Naive thymus-derived CD4-positive, alpha-beta T cell (primary cell): ENCODE measurements at regions of chr2 and their contacts with region 1.

Region 1: GRCh38 chr2:30165050-30165520 is 18.3 kb downstream of the YPEL5 start:
- DNase-seq: peak in 8 of 9 donors; percentile 41 to 89 (median 84)
- ATAC-seq: peak; percentile 75
- H3K4me3 ChIP-seq: no peak overlapping the region
- H3K4me3 Mint-ChIP-seq: peak overlapping the region in 1 of 10 donors; percentile 37
- H3K27ac ChIP-seq: no peak overlapping the region
- H3K27ac Mint-ChIP-seq: peak overlapping the region in 4 of 9 donors; percentile 19 to 76 (median 50)
- H3K4me1 ChIP-seq: peaks cover 0 to 5% of the 10 kb centered on the region in 2 donors
- H3K4me1 Mint-ChIP-seq: peaks cover 3 to 12% (median 6%) of the 10 kb centered on the region in 7 donors
- H3K27me3 ChIP-seq: no peaks in the 10 kb centered on the region
- H3K27me3 Mint-ChIP-seq: no peaks in the 10 kb centered on the region

Region 2: DNA sequence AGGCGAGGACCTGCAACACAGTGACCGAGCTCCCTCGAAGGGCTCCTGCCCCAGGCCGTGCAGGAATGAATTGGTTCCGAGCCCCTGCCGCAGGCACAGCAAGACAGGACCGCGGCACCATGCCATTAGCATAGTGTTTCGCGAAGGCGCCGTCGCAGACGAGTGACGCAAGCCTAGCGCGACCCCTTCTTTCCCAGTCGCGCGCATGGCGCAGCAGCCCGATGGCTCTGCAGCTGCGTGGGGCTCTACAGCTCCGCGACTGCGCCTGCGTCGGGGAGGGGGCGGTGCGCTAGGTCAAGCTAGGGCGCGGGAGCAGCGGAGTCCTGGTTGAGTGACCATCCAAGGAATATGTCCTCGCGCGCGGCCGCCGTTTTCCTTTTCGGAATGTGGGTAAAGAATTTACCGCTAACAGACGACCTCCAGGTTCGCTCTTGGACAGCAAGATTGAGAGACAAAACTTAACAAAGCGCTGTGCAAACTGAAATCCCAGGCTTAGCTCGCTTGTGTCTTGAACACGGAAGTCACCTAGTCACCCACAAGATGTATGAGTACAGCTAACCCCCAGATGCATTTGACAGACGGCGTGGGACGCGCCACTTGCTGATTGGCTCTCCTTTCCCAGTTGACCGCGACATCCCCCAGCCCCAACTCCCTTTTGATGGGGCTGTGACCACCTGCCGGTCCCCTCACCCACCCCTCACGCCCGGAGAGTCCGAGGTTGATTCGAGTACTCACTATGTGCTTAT is 1294.8 kb before region 1 on chr2 and contains the start of gene TRMT61B:
- CTCF ChIA-PET with region 1: no interaction called
- POLR2A ChIA-PET with region 1: no interaction called
- intact Hi-C with region 1: no loop called
- DNase-seq: peak; percentile 94 to 97 (median 95)
- ATAC-seq: peak; percentile 98
- H3K4me3 ChIP-seq: peak within 1 kb of the TSS; percentile 96
- H3K4me3 Mint-ChIP-seq: peak within 1 kb of the TSS; percentile 90 to 98 (median 96)
- H3K27ac ChIP-seq: peak within 1 kb of the TSS; percentile 87
- H3K27ac Mint-ChIP-seq: peak within 1 kb of the TSS; percentile 95 to 100 (median 98)
- H3K4me1 ChIP-seq: peaks cover 19 to 22% of the 10 kb centered on the region in 2 donors
- H3K4me1 Mint-ChIP-seq: peaks cover 22 to 48% (median 37%) of the 10 kb centered on the region in 7 donors
- H3K27me3 ChIP-seq: no peaks in the 10 kb centered on the region
- H3K27me3 Mint-ChIP-seq: peaks cover 0 to 6% (median 2%) of the 10 kb centered on the region in 5 donors
- total RNA-seq, gene TRMT61B: 14.8 to 24.5 (median 20.5) TPM

Region 3: GRCh38 chr2:30122362-30122761 is 42.7 kb before region 1 on chr2:
- CTCF ChIA-PET with region 1: interaction called, 10 read pairs
- POLR2A ChIA-PET with region 1: no interaction called
- intact Hi-C with region 1: no loop called
- DNase-seq: no peak
- ATAC-seq: no peak
- H3K4me3 ChIP-seq: no peak overlapping the region
- H3K4me3 Mint-ChIP-seq: no peak overlapping the region
- H3K27ac ChIP-seq: no peak overlapping the region
- H3K27ac Mint-ChIP-seq: no peak overlapping the region
- H3K4me1 ChIP-seq: no peaks in the 10 kb centered on the region
- H3K4me1 Mint-ChIP-seq: peaks cover 0 to 3% (median 0%) of the 10 kb centered on the region in 7 donors
- H3K27me3 ChIP-seq: peaks cover 0 to 4% of the 10 kb centered on the region in 2 donors
- H3K27me3 Mint-ChIP-seq: peaks cover 0 to 32% (median 9%) of the 10 kb centered on the region in 5 donors

Region 4: DNA sequence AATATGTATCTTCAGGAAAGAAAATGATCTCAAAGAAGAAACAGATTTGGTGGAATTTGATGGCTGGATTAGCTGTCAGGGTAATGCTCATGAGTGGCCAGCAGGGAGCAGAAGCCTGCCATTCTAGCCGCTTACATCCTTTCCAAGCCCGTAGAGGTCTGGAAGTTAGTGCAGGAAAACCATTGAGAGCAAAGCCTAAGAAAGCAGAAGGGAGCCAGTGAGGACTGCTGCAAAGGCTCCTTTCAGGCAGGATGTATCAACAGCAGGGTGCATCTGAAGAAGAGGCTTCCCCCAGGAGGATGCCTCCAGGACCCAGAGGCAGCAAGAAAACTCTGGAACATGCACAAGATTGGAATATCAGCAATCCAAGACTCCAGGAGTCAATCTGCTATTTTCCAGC is 43.4 kb after region 1 on chr2:
- CTCF ChIA-PET with region 1: interaction called, 54 read pairs
- POLR2A ChIA-PET with region 1: interaction called, 5 read pairs
- intact Hi-C with region 1: loop called (anchors 1 to 2 kb)
- DNase-seq: peak in 4 of 9 donors; percentile 19 to 42 (median 28)
- ATAC-seq: peak; percentile 69
- H3K4me3 ChIP-seq: peak overlapping the region; percentile 3
- H3K4me3 Mint-ChIP-seq: peak overlapping the region; percentile 14 to 80 (median 68)
- H3K27ac ChIP-seq: peak overlapping the region; percentile 25
- H3K27ac Mint-ChIP-seq: peak overlapping the region in 8 of 9 donors; percentile 82 to 95 (median 88)
- H3K4me1 ChIP-seq: peaks cover 8 to 33% of the 10 kb centered on the region in 2 donors
- H3K4me1 Mint-ChIP-seq: peaks cover 14 to 44% (median 35%) of the 10 kb centered on the region in 7 donors
- H3K27me3 ChIP-seq: no peaks in the 10 kb centered on the region
- H3K27me3 Mint-ChIP-seq: peaks cover 0 to 7% (median 0%) of the 10 kb centered on the region in 5 donors

Region 5: GRCh38 chr2:30231212-30231995 is 66.3 kb after region 1 on chr2 and contains the start of gene LBH:
- CTCF ChIA-PET with region 1: interaction called, 16 read pairs
- POLR2A ChIA-PET with region 1: interaction called, 16 read pairs
- intact Hi-C with region 1: loop called in 1 of 2 experiments (anchors 1 kb)
- DNase-seq: peak; percentile 74 to 92 (median 88)
- ATAC-seq: peak; percentile 72
- H3K4me3 ChIP-seq: peak within 1 kb of the TSS; percentile 75
- H3K4me3 Mint-ChIP-seq: peak within 1 kb of the TSS; percentile 87 to 98 (median 94)
- H3K27ac ChIP-seq: peak within 1 kb of the TSS; percentile 97
- H3K27ac Mint-ChIP-seq: peak within 1 kb of the TSS; percentile 87 to 100 (median 96)
- H3K4me1 ChIP-seq: peaks cover 49 to 55% of the 10 kb centered on the region in 2 donors
- H3K4me1 Mint-ChIP-seq: peaks cover 26 to 65% (median 57%) of the 10 kb centered on the region in 7 donors
- H3K27me3 ChIP-seq: no peaks in the 10 kb centered on the region
- H3K27me3 Mint-ChIP-seq: peaks cover 0 to 8% (median 0%) of the 10 kb centered on the region in 5 donors
- total RNA-seq, gene LBH: 146 to 517 (median 192) TPM

Region 6: DNA sequence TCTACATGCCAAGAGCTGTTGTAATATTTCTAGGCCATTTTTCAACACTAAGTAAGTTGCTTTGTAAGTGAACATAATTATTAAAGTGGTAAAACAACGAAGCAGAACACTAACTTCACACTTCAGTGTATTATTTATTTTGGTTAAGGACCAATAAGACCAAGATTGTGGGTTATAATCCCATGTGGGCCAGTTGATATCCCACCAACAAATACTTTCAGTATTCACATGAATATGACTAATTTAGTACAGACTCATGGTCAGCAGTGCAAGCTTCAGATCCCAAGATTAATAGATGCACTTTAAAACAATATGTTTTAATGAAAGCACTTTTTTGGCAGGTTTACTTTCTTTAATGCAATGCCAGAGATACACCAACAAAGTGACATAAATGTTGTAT is 436.3 kb after region 1 on chr2:
- CTCF ChIA-PET with region 1: interaction called, 10 read pairs
- POLR2A ChIA-PET with region 1: no interaction called
- intact Hi-C with region 1: no loop called
- DNase-seq: no peak
- ATAC-seq: no peak
- H3K4me3 ChIP-seq: no peak overlapping the region
- H3K4me3 Mint-ChIP-seq: no peak overlapping the region
- H3K27ac ChIP-seq: no peak overlapping the region
- H3K27ac Mint-ChIP-seq: peak overlapping the region in 1 of 9 donors; percentile 44
- H3K4me1 ChIP-seq: no peaks in the 10 kb centered on the region
- H3K4me1 Mint-ChIP-seq: peaks cover 0 to 17% (median 4%) of the 10 kb centered on the region in 7 donors
- H3K27me3 ChIP-seq: no peaks in the 10 kb centered on the region
- H3K27me3 Mint-ChIP-seq: no peaks in the 10 kb centered on the region

Region 7: DNA sequence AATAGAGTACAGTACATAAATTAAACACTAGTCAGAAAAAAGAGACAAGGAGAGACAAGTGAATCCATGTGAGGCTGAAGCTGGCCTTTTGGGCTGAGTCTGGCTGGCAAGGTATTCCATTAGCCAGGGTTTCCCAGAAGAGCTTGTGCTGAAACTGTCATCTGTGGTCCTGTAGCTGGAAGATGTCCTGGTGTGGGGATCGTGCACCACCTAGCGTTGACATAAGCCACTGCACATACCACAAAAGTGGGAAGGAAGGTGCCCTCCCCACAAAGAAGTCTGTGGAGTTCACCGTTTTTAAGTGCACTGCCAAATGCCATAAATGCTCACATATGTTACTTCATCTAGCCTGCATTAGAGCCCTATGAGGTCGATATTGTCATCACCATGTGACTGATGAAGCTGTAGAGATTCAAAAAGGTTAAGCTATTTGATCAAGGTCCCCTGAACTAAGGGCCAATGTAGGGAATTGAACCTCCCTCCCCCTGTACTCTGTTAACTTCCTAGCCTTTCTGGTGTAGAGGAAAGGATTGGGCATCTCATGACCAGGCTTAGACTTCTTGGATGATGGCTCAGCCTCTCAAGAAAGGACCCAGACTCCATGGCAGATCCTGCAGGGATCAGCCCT is 1005.1 kb after region 1 on chr2:
- CTCF ChIA-PET with region 1: interaction called, 6 read pairs
- POLR2A ChIA-PET with region 1: no interaction called
- intact Hi-C with region 1: loop called in 1 of 2 experiments (anchors 10 kb)
- DNase-seq: peak in 8 of 9 donors; percentile 3 to 49 (median 28)
- ATAC-seq: peak; percentile 78
- H3K4me3 ChIP-seq: no peak overlapping the region
- H3K4me3 Mint-ChIP-seq: no peak overlapping the region
- H3K27ac ChIP-seq: no peak overlapping the region
- H3K27ac Mint-ChIP-seq: peak overlapping the region in 1 of 9 donors; percentile 32
- H3K4me1 ChIP-seq: no peaks in the 10 kb centered on the region
- H3K4me1 Mint-ChIP-seq: peaks cover 0 to under 1% (median 0%) of the 10 kb centered on the region in 7 donors
- H3K27me3 ChIP-seq: no peaks in the 10 kb centered on the region
- H3K27me3 Mint-ChIP-seq: peaks cover 0 to 6% (median under 1%) of the 10 kb centered on the region in 5 donors

Region 8: DNA sequence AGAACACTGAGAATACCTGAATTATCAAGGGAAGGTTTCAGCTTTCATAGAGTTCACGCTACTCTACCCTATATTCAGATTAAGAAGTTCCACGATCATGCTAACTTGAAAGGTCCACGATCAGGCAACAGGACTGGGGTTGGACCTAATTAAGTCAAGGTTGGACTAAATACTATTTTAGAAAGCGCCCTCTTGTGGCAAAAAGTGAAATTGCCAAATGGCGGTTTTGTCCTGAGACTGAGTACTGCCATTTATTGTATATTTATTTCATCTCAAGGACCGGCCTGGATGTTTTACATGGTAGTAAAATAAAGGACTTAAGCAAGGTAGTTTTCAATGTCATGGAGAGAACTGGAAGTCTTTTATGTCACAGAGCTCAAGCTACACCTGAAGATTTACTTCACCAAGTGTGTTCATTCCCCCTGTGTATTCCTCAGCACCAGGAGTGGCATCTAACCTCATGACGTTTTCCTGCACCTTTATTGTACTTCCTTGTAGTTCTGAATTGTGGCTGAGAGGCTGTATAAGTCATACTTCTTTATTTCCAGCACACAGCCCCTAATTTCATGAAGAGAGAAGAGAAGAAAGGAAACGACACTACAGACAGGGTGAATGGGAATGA is 1358.9 kb after region 1 on chr2:
- CTCF ChIA-PET with region 1: no interaction called
- POLR2A ChIA-PET with region 1: no interaction called
- intact Hi-C with region 1: loop called in 1 of 2 experiments (anchors 10 kb)
- DNase-seq: peak in 7 of 9 donors; percentile 12 to 45 (median 34)
- ATAC-seq: peak; percentile 53
- H3K4me3 ChIP-seq: no peak overlapping the region
- H3K4me3 Mint-ChIP-seq: no peak overlapping the region
- H3K27ac ChIP-seq: no peak overlapping the region
- H3K27ac Mint-ChIP-seq: no peak overlapping the region
- H3K4me1 ChIP-seq: no peaks in the 10 kb centered on the region
- H3K4me1 Mint-ChIP-seq: no peaks in the 10 kb centered on the region
- H3K27me3 ChIP-seq: no peaks in the 10 kb centered on the region
- H3K27me3 Mint-ChIP-seq: peaks cover 2 to 25% (median 12%) of the 10 kb centered on the region in 5 donors